ENCODE measurements at regions of chr15 and their contacts with region 1.

Region 1: DNA sequence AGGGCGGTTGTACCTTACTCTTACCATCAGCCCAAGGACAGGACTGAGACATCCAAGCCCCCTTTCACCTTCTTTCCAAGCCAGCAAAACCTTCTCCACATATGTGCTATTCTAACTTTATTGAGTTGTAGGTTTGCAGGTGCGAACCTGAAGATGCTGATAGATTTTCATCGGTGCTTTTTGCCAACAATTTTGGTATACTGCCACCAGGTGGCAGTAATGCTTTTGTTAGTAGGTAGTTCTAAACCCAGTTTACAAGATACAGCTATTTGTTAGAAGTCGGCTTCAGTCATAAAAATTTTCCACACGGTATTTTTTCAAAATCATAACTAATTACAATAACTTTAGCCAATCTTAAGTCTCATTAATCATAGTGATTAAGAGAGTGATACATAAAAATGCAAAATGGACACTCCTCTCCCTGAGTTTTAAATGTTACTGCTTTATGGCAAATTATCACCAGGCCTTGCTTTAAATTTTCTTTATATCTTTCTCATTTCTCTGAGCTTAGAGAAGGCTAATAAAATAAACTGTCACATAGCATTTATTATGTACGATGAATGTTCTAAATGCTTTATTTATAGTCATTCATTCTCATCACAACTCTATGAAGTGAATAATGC is 636 bp downstream of the TBC1D21 start:
- DNase-seq: peak; percentile 4
- H3K4me3 Mint-ChIP-seq: no peak overlapping the region
- H3K27ac Mint-ChIP-seq: no peak overlapping the region
- H3K4me1 Mint-ChIP-seq: no peaks in the 10 kb centered on the region
- H3K27me3 Mint-ChIP-seq: peaks cover 51% of the 10 kb centered on the region

Region 2: DNA sequence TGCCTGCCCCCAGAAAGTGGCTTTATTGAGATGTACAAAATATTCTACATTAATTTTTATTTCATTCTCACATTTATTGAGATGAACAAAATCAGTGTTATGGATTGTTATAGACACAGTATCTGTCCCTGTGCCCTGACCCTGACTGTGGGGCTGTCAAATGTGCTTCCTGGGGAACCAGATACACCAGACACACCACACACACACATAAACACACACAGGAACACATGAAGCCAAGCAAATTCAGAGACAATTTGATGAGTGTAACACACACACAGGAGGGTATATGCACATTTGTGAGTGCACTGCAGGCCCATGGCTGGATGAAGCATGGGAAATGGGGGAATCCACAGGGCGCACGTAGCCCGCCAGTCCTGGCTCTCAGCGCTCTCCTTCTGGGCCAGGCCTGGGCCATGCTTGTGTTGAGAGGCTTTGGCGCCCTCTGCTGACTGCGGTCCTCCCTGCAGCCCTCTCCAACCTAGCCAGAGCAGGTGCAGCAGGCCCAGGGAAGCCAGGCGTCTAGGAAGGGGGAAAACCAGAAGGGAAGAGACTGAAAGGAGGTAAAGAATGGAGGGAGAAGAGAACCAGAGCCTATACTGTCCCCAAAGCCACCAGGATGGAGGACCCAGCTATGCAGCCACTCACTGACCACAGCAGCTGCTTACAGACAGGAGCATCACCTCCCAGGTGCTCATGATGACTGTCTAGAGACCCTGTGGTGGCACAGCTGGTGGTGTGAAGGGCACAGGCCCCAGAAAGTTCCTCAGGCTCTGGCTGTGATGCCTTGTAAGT is 34.2 kb after region 1 on chr15:
- intact Hi-C with region 1: loop called (anchors 1 kb)
- DNase-seq: peak; percentile 62
- H3K4me3 Mint-ChIP-seq: no peak overlapping the region
- H3K27ac Mint-ChIP-seq: no peak overlapping the region
- H3K4me1 Mint-ChIP-seq: peaks cover 13% of the 10 kb centered on the region
- H3K27me3 Mint-ChIP-seq: no peaks in the 10 kb centered on the region

Region 3: DNA sequence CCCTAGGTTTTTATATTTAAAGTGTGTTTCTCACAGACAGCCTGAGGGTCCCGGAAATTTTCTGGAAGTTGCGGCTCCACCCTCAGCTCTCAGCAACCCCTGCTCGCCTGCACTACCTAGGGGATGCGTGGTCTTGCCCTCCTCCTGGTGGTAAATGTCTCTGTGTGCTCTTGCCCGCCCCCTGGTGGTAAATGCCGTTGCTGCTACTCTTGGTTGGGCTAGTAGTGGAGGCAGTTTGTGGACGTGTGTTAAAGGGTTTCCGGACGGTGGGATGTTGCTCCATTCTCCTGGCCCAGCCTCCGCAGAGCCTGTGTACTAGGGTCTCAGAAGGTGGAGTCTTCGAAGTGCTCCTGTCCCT is 90.7 kb after region 1 on chr15:
- intact Hi-C with region 1: loop called (anchors 1 kb)
- DNase-seq: peak; percentile 77
- H3K4me3 Mint-ChIP-seq: peak overlapping the region; percentile 73
- H3K27ac Mint-ChIP-seq: peak overlapping the region; percentile 87
- H3K4me1 Mint-ChIP-seq: peaks cover 37% of the 10 kb centered on the region
- H3K27me3 Mint-ChIP-seq: no peaks in the 10 kb centered on the region

Region 4: GRCh38 chr15:74322181-74323076 is 448.4 kb after region 1 on chr15:
- intact Hi-C with region 1: loop called (anchors 5 kb)
- DNase-seq: peak; percentile 31
- H3K4me3 Mint-ChIP-seq: no peak overlapping the region
- H3K27ac Mint-ChIP-seq: no peak overlapping the region
- H3K4me1 Mint-ChIP-seq: no peaks in the 10 kb centered on the region
- H3K27me3 Mint-ChIP-seq: peaks cover 2% of the 10 kb centered on the region

Measured in activated T-helper 1 cell treated with anti-CD3 and anti-CD28 coated beads, Interleukin-12 subunit alpha, Interleukin-12 subunit beta, Interleukin-2, Interleukin-4 antibody, amounts not matched to agents 30 ng/mL and 10 ng/mL and 1 ng/mL, durations not matched to agents 14 hours and 24 hours and 36 hours (primary cell).